A549 (cell line): ENCODE measurements at regions of chr2 and their contacts with region 1.

Region 1: GRCh38 chr2:112626604-112627059 is 19.1 kb upstream of the SLC20A1 start:
- DNase-seq: peak; percentile 64 to 75
- ATAC-seq: peak; percentile 79 to 88
- H3K4me3 ChIP-seq: peak overlapping the region; percentile 15; the same call in 2 of the 3 replicates
- H3K27ac ChIP-seq: peak overlapping the region; percentile 90 to 93
- H3K4me1 ChIP-seq: peaks cover 99% of the 10 kb centered on the region
- CTCF ChIP-seq: peak; percentile 96
- EP300 ChIP-seq: no peak
- POLR2A ChIP-seq: no peak
- RAD21 ChIP-seq: peak; percentile 95

Region 2: GRCh38 chr2:112606488-112606902 is 20.1 kb before region 1 on chr2:
- CTCF ChIA-PET with region 1: interaction called, 137 read pairs
- POLR2A ChIA-PET with region 1: no interaction called
- DNase-seq: no peak
- ATAC-seq: peak; percentile 44 to 59; a peak in 4 of 6 replicates
- H3K4me3 ChIP-seq: no peak overlapping the region
- H3K27ac ChIP-seq: peak overlapping the region in 1 of 2 experiments; percentile 22; a peak in 1 of 6 replicates
- H3K4me1 ChIP-seq: no peaks in the 10 kb centered on the region
- CTCF ChIP-seq: no peak
- EP300 ChIP-seq: no peak
- POLR2A ChIP-seq: no peak
- RAD21 ChIP-seq: no peak

Region 3: GRCh38 chr2:112645310-112646101 is 18.9 kb after region 1 on chr2 and contains the start of gene SLC20A1:
- CTCF ChIA-PET with region 1: interaction called, 202 read pairs
- POLR2A ChIA-PET with region 1: interaction called, 68 read pairs
- DNase-seq: peak; percentile 81 to 94
- ATAC-seq: peak; percentile 83 to 94
- H3K4me3 ChIP-seq: peak within 1 kb of the TSS; percentile 98
- H3K27ac ChIP-seq: peak within 1 kb of the TSS; percentile 98 to 99
- H3K4me1 ChIP-seq: peaks cover 43% of the 10 kb centered on the region
- CTCF ChIP-seq: peak; percentile 45
- EP300 ChIP-seq: peak in 1 of 2 experiments; percentile 28; a peak in 1 of 5 replicates
- POLR2A ChIP-seq: peak; percentile 95
- RAD21 ChIP-seq: peak; percentile 32 to 53; a peak in 4 of 5 replicates
- polyA plus RNA-seq, gene SLC20A1: 86.8 and 88.7 TPM in 2 replicates

Region 4: DNA sequence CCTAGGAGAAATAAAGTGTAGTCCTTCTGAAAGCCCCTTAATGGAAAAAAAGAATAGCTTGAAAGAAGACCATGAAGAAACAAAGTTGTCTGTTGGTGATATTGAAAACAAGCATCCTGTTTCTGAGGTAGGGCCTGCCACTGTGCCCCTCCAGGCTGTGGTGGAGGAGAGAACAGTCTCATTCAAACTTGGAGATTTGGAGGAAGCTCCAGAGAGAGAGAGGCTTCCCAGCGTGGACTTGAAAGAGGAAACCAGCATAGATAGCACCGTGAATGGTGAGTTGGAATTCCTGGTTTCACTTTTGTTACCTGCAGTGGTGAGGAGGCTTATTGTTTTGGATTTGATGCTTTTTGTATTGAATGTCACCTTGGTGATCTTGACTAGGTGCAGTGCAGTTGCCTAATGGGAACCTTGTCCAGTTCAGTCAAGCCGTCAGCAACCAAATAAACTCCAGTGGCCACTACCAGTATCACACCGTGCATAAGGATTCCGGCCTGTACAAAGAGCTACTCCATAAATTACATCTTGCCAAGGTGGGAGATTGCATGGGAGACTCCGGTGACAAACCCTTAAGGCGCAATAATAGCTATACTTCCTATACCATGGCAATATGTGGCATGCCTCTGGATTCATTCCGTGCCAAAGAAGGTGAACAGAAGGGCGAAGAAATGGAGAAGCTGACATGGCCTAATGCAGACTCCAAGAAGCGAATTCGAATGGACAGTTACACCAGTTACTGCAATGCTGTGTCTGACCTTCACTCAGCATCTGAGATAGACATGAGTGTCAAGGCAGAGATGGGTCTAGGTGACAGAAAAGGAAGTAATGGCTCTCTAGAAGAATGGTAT is 32.4 kb after region 1 on chr2:
- CTCF ChIA-PET with region 1: interaction called, 27 read pairs
- POLR2A ChIA-PET with region 1: no interaction called
- DNase-seq: peak in 1 of 2 experiments; percentile 41
- ATAC-seq: peak; percentile 68 to 73
- H3K4me3 ChIP-seq: no peak overlapping the region
- H3K27ac ChIP-seq: no peak overlapping the region
- H3K4me1 ChIP-seq: peaks cover 45% of the 10 kb centered on the region
- CTCF ChIP-seq: no peak
- EP300 ChIP-seq: no peak
- POLR2A ChIP-seq: no peak
- RAD21 ChIP-seq: no peak

Region 5: DNA sequence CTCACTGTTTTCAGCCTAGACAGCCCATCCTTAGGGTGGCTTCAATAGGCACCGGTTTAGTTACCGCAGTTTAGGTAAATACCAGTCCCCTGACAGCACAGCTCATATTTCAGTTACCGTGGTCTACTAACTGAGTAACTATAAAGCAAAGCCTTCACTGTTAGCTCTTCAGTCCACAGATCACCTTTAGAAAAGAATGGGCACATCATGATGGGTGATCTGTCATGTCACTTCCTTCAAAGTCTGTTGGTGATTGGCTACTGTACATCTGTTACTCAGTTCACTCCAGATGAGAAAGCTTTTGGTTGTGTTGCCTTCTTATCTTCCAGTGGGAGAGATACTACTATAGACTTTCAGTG is 40.1 kb after region 1 on chr2:
- CTCF ChIA-PET with region 1: interaction called, 26 read pairs
- POLR2A ChIA-PET with region 1: no interaction called
- DNase-seq: no peak
- ATAC-seq: peak; percentile 11 to 36; a peak in 5 of 6 replicates
- H3K4me3 ChIP-seq: no peak overlapping the region
- H3K27ac ChIP-seq: no peak overlapping the region
- H3K4me1 ChIP-seq: peaks cover 16% of the 10 kb centered on the region
- CTCF ChIP-seq: no peak
- EP300 ChIP-seq: no peak
- POLR2A ChIP-seq: no peak
- RAD21 ChIP-seq: no peak

Region 6: GRCh38 chr2:112685271-112685884 is 58.7 kb after region 1 on chr2:
- CTCF ChIA-PET with region 1: interaction called, 45 read pairs
- POLR2A ChIA-PET with region 1: interaction called, 3 read pairs
- DNase-seq: peak; percentile 26 to 40
- ATAC-seq: peak; percentile 79 to 81
- H3K4me3 ChIP-seq: no peak overlapping the region
- H3K27ac ChIP-seq: no peak overlapping the region
- H3K4me1 ChIP-seq: peaks cover 14% of the 10 kb centered on the region
- CTCF ChIP-seq: no peak
- EP300 ChIP-seq: no peak
- POLR2A ChIP-seq: no peak
- RAD21 ChIP-seq: no peak

Region 7: GRCh38 chr2:112692496-112692911 is 65.9 kb after region 1 on chr2:
- CTCF ChIA-PET with region 1: interaction called, 45 read pairs
- POLR2A ChIA-PET with region 1: interaction called, 4 read pairs
- DNase-seq: peak; percentile 80 to 97
- ATAC-seq: peak; percentile 95 to 97
- H3K4me3 ChIP-seq: no peak overlapping the region
- H3K27ac ChIP-seq: peak overlapping the region; percentile 93 to 94
- H3K4me1 ChIP-seq: peaks cover 46% of the 10 kb centered on the region
- CTCF ChIP-seq: no peak
- EP300 ChIP-seq: peak in 1 of 2 experiments; percentile 45; a peak in 1 of 5 replicates
- POLR2A ChIP-seq: no peak
- RAD21 ChIP-seq: no peak; a peak in 1 of 5 replicates